PC-9 (cell line): ENCODE measurements at regions of chr3 and their contacts with region 1.

Region 1: DNA sequence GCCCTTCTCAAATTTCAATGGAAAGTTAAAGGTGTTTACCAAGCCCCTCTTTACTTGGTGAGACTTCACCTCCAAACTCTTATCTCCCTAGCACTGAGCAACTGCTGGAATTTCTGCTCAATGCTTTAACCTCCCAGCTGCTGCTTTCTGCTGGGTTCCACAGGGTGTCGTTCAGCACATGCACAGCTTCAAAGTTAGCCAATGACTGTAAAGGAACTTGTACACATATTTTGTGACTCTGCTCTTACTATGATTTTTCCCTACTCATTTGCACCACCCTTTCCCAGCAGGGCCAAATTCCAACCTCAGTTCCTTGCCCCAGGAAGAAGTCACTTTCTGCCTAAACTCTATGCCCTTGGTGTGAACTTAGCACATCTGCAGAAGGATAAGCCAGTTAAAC is 89.7 kb downstream of the ULK4 start:
- DNase-seq: no peak
- H3K4me3 ChIP-seq: no peak overlapping the region
- H3K27ac ChIP-seq: no peak overlapping the region
- H3K4me1 ChIP-seq: no peaks in the 10 kb centered on the region
- H3K27me3 ChIP-seq: no peaks in the 10 kb centered on the region
- CTCF ChIP-seq: no peak

Region 2: DNA sequence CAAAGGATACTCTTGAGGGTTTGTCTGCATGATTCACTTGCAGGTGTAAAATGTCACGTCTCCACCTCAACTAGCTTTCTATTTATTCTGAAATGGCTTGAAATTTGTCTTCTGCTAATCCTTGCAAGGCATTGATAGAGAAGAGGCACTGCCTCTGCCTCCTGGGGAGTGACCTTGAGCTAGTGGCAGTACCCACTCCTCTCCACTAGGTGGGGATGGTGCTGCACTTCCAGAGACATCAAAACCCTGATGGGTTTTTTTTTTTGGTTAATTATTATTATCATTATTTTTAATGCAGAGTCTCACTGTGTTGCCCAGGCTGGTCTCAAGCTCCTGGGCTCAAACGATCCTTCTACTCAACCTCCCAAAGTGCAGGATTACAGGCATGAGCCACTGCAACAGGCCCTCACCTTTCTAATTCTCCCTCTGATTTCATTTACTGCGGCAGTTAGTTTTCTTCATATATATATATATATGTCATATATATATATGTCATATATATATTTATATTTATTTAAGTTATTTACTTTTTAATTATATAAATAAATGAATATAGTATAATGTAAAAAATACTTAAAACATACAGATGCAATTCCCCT is 1680.2 kb before region 1 on chr3:
- CTCF ChIA-PET with region 1: no interaction called
- POLR2A ChIA-PET with region 1: no interaction called
- intact Hi-C with region 1: loop called (anchors 10 kb)
- DNase-seq: peak; percentile 39 to 56
- H3K4me3 ChIP-seq: no peak overlapping the region
- H3K27ac ChIP-seq: no peak overlapping the region
- H3K4me1 ChIP-seq: no peaks in the 10 kb centered on the region
- H3K27me3 ChIP-seq: no peaks in the 10 kb centered on the region
- CTCF ChIP-seq: peak; percentile 87

Region 3: DNA sequence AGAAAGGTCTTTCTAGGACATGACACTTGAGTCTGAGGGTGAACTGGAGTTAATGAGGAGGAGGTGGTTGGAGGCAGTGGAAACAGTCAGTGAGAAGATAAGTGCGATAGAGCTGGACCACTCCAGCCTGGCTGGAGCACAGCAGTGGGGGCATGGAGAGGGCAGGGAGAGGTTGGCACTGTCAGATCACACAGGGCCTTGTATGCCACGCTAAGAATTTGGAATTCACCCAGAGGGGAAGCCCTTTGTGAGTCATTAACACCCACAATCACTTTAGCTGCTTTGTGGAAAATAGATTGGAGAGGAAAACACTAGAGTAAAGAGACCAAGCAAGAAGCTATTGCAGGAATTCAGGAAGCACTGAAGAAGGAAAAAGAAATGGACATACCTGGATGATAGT is 1264.1 kb before region 1 on chr3:
- CTCF ChIA-PET with region 1: interaction called, 10 read pairs
- POLR2A ChIA-PET with region 1: no interaction called
- intact Hi-C with region 1: no loop called
- DNase-seq: no peak
- H3K4me3 ChIP-seq: no peak overlapping the region
- H3K27ac ChIP-seq: no peak overlapping the region
- H3K4me1 ChIP-seq: no peaks in the 10 kb centered on the region
- H3K27me3 ChIP-seq: no peaks in the 10 kb centered on the region
- CTCF ChIP-seq: no peak

Region 4: DNA sequence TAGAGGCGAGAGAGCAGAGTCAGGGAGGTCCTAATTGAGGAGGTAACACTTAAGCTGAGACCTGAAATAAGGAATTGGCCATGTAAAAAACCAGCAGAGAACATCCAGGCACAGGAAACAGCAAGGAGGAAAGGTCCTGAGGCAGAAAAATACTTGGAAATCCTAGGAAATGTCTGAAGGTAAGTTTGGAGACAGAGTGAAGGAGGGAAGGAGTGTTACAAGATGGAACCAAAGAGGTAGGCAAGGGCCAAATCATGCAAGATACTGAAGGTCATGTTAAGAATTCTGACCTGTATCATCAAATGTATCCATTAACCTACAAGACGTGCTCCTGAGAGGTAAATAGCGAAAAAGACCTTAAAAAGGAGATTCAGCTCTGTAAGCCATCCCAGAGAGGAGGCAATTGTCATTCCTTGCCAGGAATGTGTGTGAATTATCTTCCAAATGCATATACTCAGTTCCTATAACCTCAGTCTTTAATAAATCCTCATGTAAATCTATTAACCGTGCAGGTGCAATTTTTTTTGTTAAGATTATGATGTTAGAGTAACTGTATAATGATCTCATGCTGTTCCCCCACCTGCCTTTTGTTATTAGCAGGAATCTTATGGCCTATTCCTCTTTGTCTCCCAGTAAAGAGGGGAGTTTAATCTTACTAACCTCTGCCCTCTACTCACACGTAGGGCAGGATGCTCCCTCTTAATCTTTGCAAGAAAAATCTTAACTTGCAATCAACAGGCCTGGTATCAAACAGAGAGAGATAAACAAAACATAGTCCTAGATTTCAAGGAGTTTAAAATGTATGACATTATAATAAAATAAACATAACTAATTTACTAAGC is 77.2 kb before region 1 on chr3:
- CTCF ChIA-PET with region 1: no interaction called
- POLR2A ChIA-PET with region 1: no interaction called
- intact Hi-C with region 1: no loop called
- DNase-seq: no peak
- H3K4me3 ChIP-seq: no peak overlapping the region
- H3K27ac ChIP-seq: no peak overlapping the region
- H3K4me1 ChIP-seq: no peaks in the 10 kb centered on the region
- H3K27me3 ChIP-seq: no peaks in the 10 kb centered on the region
- CTCF ChIP-seq: no peak